PC-9 (cell line): ENCODE measurements at regions of chr11 and their contacts with region 1.

Region 1: GRCh38 chr11:32698579-32698978 is 95.9 kb downstream of the CCDC73 start:
- DNase-seq: no peak
- H3K4me3 ChIP-seq: no peak overlapping the region
- H3K27ac ChIP-seq: peak overlapping the region; percentile 48
- H3K4me1 ChIP-seq: peaks cover 9% of the 10 kb centered on the region
- H3K27me3 ChIP-seq: no peaks in the 10 kb centered on the region
- CTCF ChIP-seq: no peak

Region 2: GRCh38 chr11:32487270-32487669 is 211.3 kb before region 1 on chr11:
- CTCF ChIA-PET with region 1: no interaction called
- POLR2A ChIA-PET with region 1: interaction called, 12 read pairs
- intact Hi-C with region 1: no loop called
- DNase-seq: peak; percentile 2 to 26
- H3K4me3 ChIP-seq: no peak overlapping the region
- H3K27ac ChIP-seq: no peak overlapping the region
- H3K4me1 ChIP-seq: no peaks in the 10 kb centered on the region
- H3K27me3 ChIP-seq: peaks cover 3% of the 10 kb centered on the region; the same call in 1 of the 2 replicates
- CTCF ChIP-seq: peak; percentile 50; the same call in 1 of the 2 replicates

Region 3: GRCh38 chr11:32838505-32838904 is 139.9 kb after region 1 on chr11:
- CTCF ChIA-PET with region 1: no interaction called
- POLR2A ChIA-PET with region 1: no interaction called
- intact Hi-C with region 1: no loop called
- DNase-seq: peak; percentile 18 to 89
- H3K4me3 ChIP-seq: no peak overlapping the region
- H3K27ac ChIP-seq: peak overlapping the region; percentile 63
- H3K4me1 ChIP-seq: peaks cover 33% of the 10 kb centered on the region
- H3K27me3 ChIP-seq: no peaks in the 10 kb centered on the region
- CTCF ChIP-seq: no peak